ENCODE measurements at regions of chr1 and their contacts with region 1.

Region 1: DNA sequence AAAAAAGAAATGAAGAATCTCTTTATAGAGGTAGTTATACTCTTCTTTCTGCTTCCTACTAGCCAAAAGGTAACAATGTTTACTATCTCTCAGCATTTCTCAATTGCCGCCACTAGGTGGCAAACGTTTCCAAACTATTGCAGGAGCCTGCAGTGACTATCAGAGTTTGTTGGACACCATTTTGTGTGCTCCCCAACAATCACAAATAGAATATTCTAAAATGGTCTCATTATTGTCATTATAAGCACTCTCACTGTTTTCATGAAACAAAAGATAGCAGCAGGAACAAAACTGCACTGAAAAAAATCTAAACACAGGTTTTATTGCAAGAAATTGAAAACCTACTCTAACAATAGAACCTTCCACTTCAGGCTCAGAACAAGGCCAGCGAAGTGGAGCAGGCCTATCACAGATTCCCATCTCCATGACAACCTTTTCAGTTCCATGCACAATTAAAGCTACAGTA is 83.9 kb upstream of the PLPPR4 start:
- DNase-seq: peak; percentile 80
- ATAC-seq: peak; percentile 91
- H3K4me3 Mint-ChIP-seq: no peak overlapping the region
- H3K27ac Mint-ChIP-seq: no peak overlapping the region
- H3K4me1 Mint-ChIP-seq: no peaks in the 10 kb centered on the region
- H3K27me3 Mint-ChIP-seq: no peaks in the 10 kb centered on the region

Region 2: GRCh38 chr1:99084562-99084961 is 95.8 kb before region 1 on chr1:
- CTCF ChIA-PET with region 1: no interaction called
- POLR2A ChIA-PET with region 1: no interaction called
- intact Hi-C with region 1: no loop called
- DNase-seq: no peak
- ATAC-seq: no peak
- H3K4me3 Mint-ChIP-seq: no peak overlapping the region
- H3K27ac Mint-ChIP-seq: no peak overlapping the region
- H3K4me1 Mint-ChIP-seq: no peaks in the 10 kb centered on the region
- H3K27me3 Mint-ChIP-seq: no peaks in the 10 kb centered on the region

Region 3: DNA sequence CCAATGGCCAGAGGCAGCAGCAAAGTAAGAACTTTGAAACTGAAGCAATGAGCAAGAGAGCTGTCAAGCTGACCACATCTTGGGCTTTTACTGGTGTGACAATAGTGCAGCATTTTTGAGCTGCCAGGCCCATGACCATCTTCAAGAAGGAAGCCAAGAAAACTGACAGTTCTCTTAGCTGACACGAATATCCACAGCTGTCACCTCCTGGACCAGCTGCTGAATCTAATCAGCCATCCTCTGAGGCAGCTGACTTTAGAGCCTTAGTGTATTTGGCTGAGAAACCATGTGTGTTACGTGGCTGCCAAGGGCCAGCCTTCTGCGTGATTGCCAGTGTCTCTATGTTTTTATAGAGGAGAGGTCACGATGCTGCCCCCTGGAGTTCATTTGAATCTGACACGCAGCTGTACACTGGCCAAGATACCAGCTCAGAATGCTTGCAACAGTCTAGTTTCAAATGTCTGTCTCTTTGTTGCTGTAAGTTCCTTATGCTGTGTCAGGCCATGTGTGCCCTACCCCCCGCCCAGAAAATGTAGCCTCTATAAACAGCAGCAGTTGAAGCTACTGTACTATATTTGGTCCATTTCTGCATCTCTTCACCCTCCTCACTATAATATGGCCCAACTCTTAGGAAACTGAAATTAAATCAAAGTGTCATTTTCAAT is 505.3 kb after region 1 on chr1:
- CTCF ChIA-PET with region 1: interaction called, 4 read pairs
- POLR2A ChIA-PET with region 1: no interaction called
- intact Hi-C with region 1: loop called (anchors 1 to 5 kb)
- DNase-seq: peak; percentile 67
- ATAC-seq: peak; percentile 73
- H3K4me3 Mint-ChIP-seq: no peak overlapping the region
- H3K27ac Mint-ChIP-seq: no peak overlapping the region
- H3K4me1 Mint-ChIP-seq: no peaks in the 10 kb centered on the region
- H3K27me3 Mint-ChIP-seq: peaks cover 6% of the 10 kb centered on the region

Measured in activated CD4-positive, alpha-beta T cell treated with anti-CD3 and anti-CD28 coated beads for 36 hours (primary cell).